ENCODE measurements at regions of chr3 and their contacts with region 1.

Region 1: GRCh38 chr3:51941798-51942602 is at the starts of genes PARP3 and RRP9:
- DNase-seq: peak; percentile 100
- ATAC-seq: peak; percentile 95
- H3K4me3 Mint-ChIP-seq: peak within 1 kb of the TSS; percentile 84
- H3K27ac Mint-ChIP-seq: peak within 1 kb of the TSS; percentile 83
- H3K4me1 Mint-ChIP-seq: peaks cover 33% of the 10 kb centered on the region
- H3K27me3 Mint-ChIP-seq: no peaks in the 10 kb centered on the region
- total RNA-seq, gene PARP3: 10.6 to 12.2 TPM
- total RNA-seq, gene RRP9: 38.2 to 39.3 TPM

Region 2: GRCh38 chr3:50298836-50299637 is 1643.0 kb before region 1 on chr3 and contains the starts of genes HYAL3 and NAA80:
- CTCF ChIA-PET with region 1: no interaction called
- POLR2A ChIA-PET with region 1: no interaction called
- intact Hi-C with region 1: loop called in 1 of 2 experiments (anchors 5 kb)
- DNase-seq: peak; percentile 100
- ATAC-seq: peak; percentile 89
- H3K4me3 Mint-ChIP-seq: peak within 1 kb of the TSS; percentile 97
- H3K27ac Mint-ChIP-seq: peak within 1 kb of the TSS; percentile 96
- H3K4me1 Mint-ChIP-seq: peaks cover 13% of the 10 kb centered on the region
- H3K27me3 Mint-ChIP-seq: no peaks in the 10 kb centered on the region
- total RNA-seq, gene HYAL3: 4.5 to 5.4 TPM
- total RNA-seq, gene NAA80: 17.6 to 18.7 TPM

Region 3: GRCh38 chr3:51967384-51968169 is 25.6 kb after region 1 on chr3 and contains the start of gene PCBP4:
- CTCF ChIA-PET with region 1: interaction called, 7 read pairs
- POLR2A ChIA-PET with region 1: interaction called, 3 read pairs
- intact Hi-C with region 1: loop called in 1 of 2 experiments (anchors 1 kb)
- DNase-seq: peak; percentile 62
- ATAC-seq: peak; percentile 52
- H3K4me3 Mint-ChIP-seq: peak within 1 kb of the TSS; percentile 75
- H3K27ac Mint-ChIP-seq: peak within 1 kb of the TSS; percentile 31
- H3K4me1 Mint-ChIP-seq: peaks cover 20% of the 10 kb centered on the region
- H3K27me3 Mint-ChIP-seq: no peaks in the 10 kb centered on the region
- total RNA-seq, gene PCBP4: 12.5 to 13.6 TPM

Region 4: GRCh38 chr3:52001443-52001974 is 59.5 kb after region 1 on chr3:
- CTCF ChIA-PET with region 1: interaction called, 14 read pairs
- POLR2A ChIA-PET with region 1: no interaction called
- intact Hi-C with region 1: loop called (anchors 1 kb)
- DNase-seq: peak; percentile 91
- ATAC-seq: peak; percentile 97
- H3K4me3 Mint-ChIP-seq: no peak overlapping the region
- H3K27ac Mint-ChIP-seq: no peak overlapping the region
- H3K4me1 Mint-ChIP-seq: peaks cover 16% of the 10 kb centered on the region
- H3K27me3 Mint-ChIP-seq: no peaks in the 10 kb centered on the region

Region 5: GRCh38 chr3:52197842-52198668 is 256.1 kb after region 1 on chr3 and contains the start of gene ALAS1:
- CTCF ChIA-PET with region 1: no interaction called
- POLR2A ChIA-PET with region 1: no interaction called
- intact Hi-C with region 1: loop called in 1 of 2 experiments (anchors 1 kb)
- DNase-seq: peak; percentile 97
- ATAC-seq: peak; percentile 95
- H3K4me3 Mint-ChIP-seq: peak within 1 kb of the TSS; percentile 96
- H3K27ac Mint-ChIP-seq: peak within 1 kb of the TSS; percentile 91
- H3K4me1 Mint-ChIP-seq: peaks cover 48% of the 10 kb centered on the region
- H3K27me3 Mint-ChIP-seq: no peaks in the 10 kb centered on the region
- total RNA-seq, gene ALAS1: 52.8 to 68.7 TPM

Region 6: GRCh38 chr3:52455283-52456168 is 513.5 kb after region 1 on chr3 and contains the start of gene NISCH:
- CTCF ChIA-PET with region 1: no interaction called
- POLR2A ChIA-PET with region 1: no interaction called
- intact Hi-C with region 1: loop called in 1 of 2 experiments (anchors 1 kb)
- DNase-seq: peak; percentile 98
- ATAC-seq: peak; percentile 88
- H3K4me3 Mint-ChIP-seq: peak within 1 kb of the TSS; percentile 96
- H3K27ac Mint-ChIP-seq: peak within 1 kb of the TSS; percentile 95
- H3K4me1 Mint-ChIP-seq: peaks cover 36% of the 10 kb centered on the region
- H3K27me3 Mint-ChIP-seq: no peaks in the 10 kb centered on the region
- total RNA-seq, gene NISCH: 61.4 to 68.9 TPM

Measured in activated CD4-positive, alpha-beta T cell treated with anti-CD3 and anti-CD28 coated beads for 36 hours (primary cell).